ENCODE measurements at regions of chr1 and their contacts with region 1.

Region 1: GRCh38 chr1:231866392-231867331 is 240.1 kb downstream of the DISC1 start:
- DNase-seq: peak; percentile 22 to 81 (median 45)
- ATAC-seq: no peak
- H3K4me3 ChIP-seq: no peak overlapping the region
- H3K4me3 Mint-ChIP-seq: no peak overlapping the region
- H3K27ac ChIP-seq: no peak overlapping the region
- H3K27ac Mint-ChIP-seq: peak overlapping the region; percentile 31
- H3K4me1 ChIP-seq: peaks cover 17% of the 10 kb centered on the region
- H3K4me1 Mint-ChIP-seq: peaks cover 66% of the 10 kb centered on the region
- H3K27me3 ChIP-seq: no peaks in the 10 kb centered on the region
- H3K27me3 Mint-ChIP-seq: no peaks in the 10 kb centered on the region
- CTCF ChIP-seq: peak; percentile 98

Region 2: DNA sequence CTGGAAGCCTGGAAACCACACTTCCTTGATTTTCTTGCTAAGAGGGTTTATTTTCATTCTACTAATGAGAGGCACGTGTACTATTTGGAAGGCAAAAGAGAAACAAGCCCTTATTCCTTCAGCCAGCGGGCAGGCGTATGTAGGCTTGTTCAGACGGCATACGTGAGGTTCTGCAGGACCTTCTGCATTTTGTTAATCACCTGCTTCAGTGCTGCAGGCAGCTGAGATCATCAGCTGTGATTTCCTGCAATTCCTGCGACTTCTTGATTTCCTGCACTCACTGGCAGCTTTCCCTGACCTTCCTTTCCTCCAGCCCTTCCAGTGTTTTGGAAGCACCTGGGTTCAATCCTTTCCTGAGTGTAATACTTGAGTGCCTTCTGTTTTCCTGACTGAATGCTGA is 294.8 kb before region 1 on chr1:
- CTCF ChIA-PET with region 1: no interaction called
- POLR2A ChIA-PET with region 1: no interaction called
- intact Hi-C with region 1: no loop called
- DNase-seq: no peak
- ATAC-seq: no peak
- H3K4me3 ChIP-seq: no peak overlapping the region
- H3K4me3 Mint-ChIP-seq: no peak overlapping the region
- H3K27ac ChIP-seq: no peak overlapping the region
- H3K27ac Mint-ChIP-seq: no peak overlapping the region
- H3K4me1 ChIP-seq: no peaks in the 10 kb centered on the region
- H3K4me1 Mint-ChIP-seq: no peaks in the 10 kb centered on the region
- H3K27me3 ChIP-seq: no peaks in the 10 kb centered on the region
- H3K27me3 Mint-ChIP-seq: no peaks in the 10 kb centered on the region
- CTCF ChIP-seq: no peak

Region 3: GRCh38 chr1:231636157-231636556 is 230.5 kb before region 1 on chr1:
- CTCF ChIA-PET with region 1: no interaction called
- POLR2A ChIA-PET with region 1: no interaction called
- intact Hi-C with region 1: no loop called
- DNase-seq: no peak
- ATAC-seq: no peak
- H3K4me3 ChIP-seq: no peak overlapping the region
- H3K4me3 Mint-ChIP-seq: no peak overlapping the region
- H3K27ac ChIP-seq: no peak overlapping the region
- H3K27ac Mint-ChIP-seq: no peak overlapping the region
- H3K4me1 ChIP-seq: no peaks in the 10 kb centered on the region
- H3K4me1 Mint-ChIP-seq: peaks cover 56% of the 10 kb centered on the region
- H3K27me3 ChIP-seq: no peaks in the 10 kb centered on the region
- H3K27me3 Mint-ChIP-seq: no peaks in the 10 kb centered on the region
- CTCF ChIP-seq: no peak

Region 4: DNA sequence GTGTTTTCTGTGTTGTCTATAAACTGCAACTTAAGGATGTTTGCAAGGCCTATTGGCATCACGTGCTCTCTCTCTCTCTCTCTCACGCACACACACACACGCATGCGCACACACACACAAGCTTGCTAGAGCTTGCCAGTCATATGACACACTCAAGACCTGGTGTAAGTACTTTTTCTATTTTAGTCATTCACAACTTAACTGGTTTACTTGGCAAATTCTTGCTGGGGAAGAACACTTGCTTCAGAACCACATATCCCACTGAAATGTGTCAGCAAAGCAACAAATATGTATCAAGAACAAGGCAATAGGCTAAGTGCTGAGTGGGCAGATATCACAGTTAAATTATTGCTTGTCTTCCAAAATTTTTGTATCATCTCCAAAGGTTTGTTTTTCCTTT is 132.2 kb before region 1 on chr1:
- CTCF ChIA-PET with region 1: no interaction called
- POLR2A ChIA-PET with region 1: no interaction called
- intact Hi-C with region 1: no loop called
- DNase-seq: no peak
- ATAC-seq: no peak
- H3K4me3 ChIP-seq: no peak overlapping the region
- H3K4me3 Mint-ChIP-seq: no peak overlapping the region
- H3K27ac ChIP-seq: no peak overlapping the region
- H3K27ac Mint-ChIP-seq: no peak overlapping the region
- H3K4me1 ChIP-seq: no peaks in the 10 kb centered on the region
- H3K4me1 Mint-ChIP-seq: peaks cover 5% of the 10 kb centered on the region
- H3K27me3 ChIP-seq: no peaks in the 10 kb centered on the region
- H3K27me3 Mint-ChIP-seq: no peaks in the 10 kb centered on the region
- CTCF ChIP-seq: no peak

Region 5: DNA sequence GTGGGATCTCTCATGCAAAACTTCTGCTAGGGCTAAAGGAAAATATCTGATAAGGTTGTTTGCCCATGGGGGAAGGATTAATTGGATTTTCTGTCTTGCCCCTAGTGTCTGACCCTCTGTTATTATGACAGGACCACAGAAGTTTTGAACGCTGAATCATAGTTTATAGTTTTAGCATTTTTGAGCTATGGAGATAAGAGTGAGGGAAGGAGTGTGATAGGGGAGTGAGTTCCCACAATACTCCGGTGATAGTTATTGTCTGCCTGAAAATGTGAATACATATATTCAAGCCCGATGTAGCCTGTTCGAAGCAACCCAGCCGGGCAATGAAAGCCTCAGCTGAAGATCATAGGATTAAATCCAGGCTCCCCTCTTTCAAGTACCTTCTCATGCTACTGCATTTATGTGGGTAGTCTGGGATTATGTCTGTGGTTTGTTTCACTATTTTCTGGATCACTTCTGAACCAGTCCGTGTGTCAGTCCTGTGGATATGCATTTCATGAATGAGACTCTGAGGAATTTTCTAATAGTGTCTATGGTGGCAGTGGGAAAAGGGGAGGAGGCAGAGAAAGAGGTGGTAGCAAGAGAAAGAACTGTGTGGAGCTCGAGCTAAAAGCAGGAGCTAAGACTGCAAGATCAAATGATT is 18.7 kb after region 1 on chr1:
- CTCF ChIA-PET with region 1: no interaction called
- POLR2A ChIA-PET with region 1: no interaction called
- intact Hi-C with region 1: no loop called
- DNase-seq: no peak
- ATAC-seq: no peak
- H3K4me3 ChIP-seq: no peak overlapping the region
- H3K4me3 Mint-ChIP-seq: no peak overlapping the region
- H3K27ac ChIP-seq: no peak overlapping the region
- H3K27ac Mint-ChIP-seq: no peak overlapping the region
- H3K4me1 ChIP-seq: peaks cover 5% of the 10 kb centered on the region
- H3K4me1 Mint-ChIP-seq: peaks cover 16% of the 10 kb centered on the region
- H3K27me3 ChIP-seq: no peaks in the 10 kb centered on the region
- H3K27me3 Mint-ChIP-seq: no peaks in the 10 kb centered on the region
- CTCF ChIP-seq: no peak

Region 6: DNA sequence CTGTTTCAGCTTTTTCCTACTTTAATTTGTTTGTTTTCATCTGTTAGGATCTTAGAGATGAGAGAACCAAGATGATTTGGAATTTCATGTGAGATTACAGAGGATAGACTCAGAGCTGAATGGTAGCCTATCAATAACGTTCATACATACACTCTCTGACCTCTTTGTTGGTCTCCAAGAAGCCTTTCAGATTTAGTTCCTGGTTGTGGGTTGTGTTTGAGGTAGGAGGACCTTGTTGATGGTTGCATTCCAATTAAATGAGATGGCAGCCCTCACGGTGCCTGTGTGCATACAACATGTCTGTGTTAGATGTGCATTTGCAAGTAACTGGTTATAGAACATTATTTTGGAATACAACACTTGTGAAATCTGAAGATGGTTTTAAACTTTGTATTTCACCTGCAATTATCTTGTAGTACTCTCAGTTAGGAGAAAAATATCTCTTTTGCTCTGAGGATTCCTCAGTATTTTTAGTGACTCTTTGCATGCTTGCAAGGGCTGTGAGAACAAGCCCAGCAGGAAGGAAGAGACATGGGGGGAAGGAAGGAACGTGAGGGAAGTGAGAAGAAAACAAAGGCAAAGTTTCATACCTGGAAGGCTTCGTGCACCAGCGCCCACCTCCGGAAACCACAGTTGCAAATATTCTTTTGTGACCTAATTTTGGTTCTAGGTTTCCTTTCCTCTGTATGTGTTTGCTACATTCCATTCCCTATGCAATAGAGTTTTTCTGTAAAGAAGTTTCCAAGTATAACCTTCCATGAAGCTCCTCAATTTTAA is 51.8 kb after region 1 on chr1:
- CTCF ChIA-PET with region 1: interaction called, 4 read pairs
- POLR2A ChIA-PET with region 1: interaction called, 3 read pairs
- intact Hi-C with region 1: loop called in 1 of 2 experiments (anchors 5 kb)
- DNase-seq: peak in 12 of 14 experiments; percentile 5 to 77 (median 17)
- ATAC-seq: peak; percentile 61
- H3K4me3 ChIP-seq: peak overlapping the region; percentile 34
- H3K4me3 Mint-ChIP-seq: peak overlapping the region; percentile 71
- H3K27ac ChIP-seq: peak overlapping the region; percentile 61 to 74
- H3K27ac Mint-ChIP-seq: peak overlapping the region; percentile 85
- H3K4me1 ChIP-seq: peaks cover 71% of the 10 kb centered on the region
- H3K4me1 Mint-ChIP-seq: peaks cover 83% of the 10 kb centered on the region
- H3K27me3 ChIP-seq: no peaks in the 10 kb centered on the region
- H3K27me3 Mint-ChIP-seq: no peaks in the 10 kb centered on the region
- CTCF ChIP-seq: no peak

Region 7: GRCh38 chr1:231983588-231984193 is 117.0 kb after region 1 on chr1:
- CTCF ChIA-PET with region 1: no interaction called
- POLR2A ChIA-PET with region 1: interaction called, 3 read pairs
- intact Hi-C with region 1: loop called in 1 of 2 experiments (anchors 5 kb)
- DNase-seq: no peak
- ATAC-seq: no peak
- H3K4me3 ChIP-seq: no peak overlapping the region
- H3K4me3 Mint-ChIP-seq: no peak overlapping the region
- H3K27ac ChIP-seq: no peak overlapping the region
- H3K27ac Mint-ChIP-seq: no peak overlapping the region
- H3K4me1 ChIP-seq: no peaks in the 10 kb centered on the region
- H3K4me1 Mint-ChIP-seq: peaks cover 17% of the 10 kb centered on the region
- H3K27me3 ChIP-seq: no peaks in the 10 kb centered on the region
- H3K27me3 Mint-ChIP-seq: no peaks in the 10 kb centered on the region
- CTCF ChIP-seq: no peak

Region 8: DNA sequence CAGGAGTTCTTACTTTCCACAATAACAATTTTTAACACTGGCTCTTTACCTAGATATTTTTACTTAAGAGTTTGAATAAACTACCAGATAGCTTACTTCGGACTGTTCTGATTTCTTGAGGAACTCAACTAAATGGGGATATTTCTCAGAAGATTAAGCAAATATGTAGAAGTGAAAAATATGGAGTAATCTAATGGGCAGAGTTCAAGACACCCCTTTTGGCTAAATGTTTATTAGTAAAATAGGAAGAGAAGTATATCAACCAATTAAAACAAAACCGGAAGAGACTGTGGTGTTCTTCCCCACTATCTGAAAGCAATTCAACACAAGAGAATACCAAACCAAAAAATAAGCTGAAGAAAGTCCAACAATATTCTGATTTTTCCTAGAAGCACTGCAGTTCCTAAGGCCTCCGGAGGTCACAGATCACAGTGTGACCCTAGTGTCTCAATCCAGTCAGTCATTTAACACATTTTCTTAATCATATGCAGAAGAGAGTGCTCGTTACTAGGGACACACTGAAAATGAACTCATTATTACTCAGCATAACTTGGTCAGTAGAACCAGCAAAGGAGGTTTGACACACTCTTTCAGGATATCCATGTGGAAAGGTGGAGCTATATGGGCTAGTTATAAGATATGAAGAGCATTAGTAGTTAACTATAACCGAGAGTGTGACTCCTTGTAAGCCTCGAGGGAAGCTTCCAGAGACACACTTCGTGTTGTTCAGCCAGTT is 758.1 kb after region 1 on chr1:
- CTCF ChIA-PET with region 1: interaction called, 5 read pairs
- POLR2A ChIA-PET with region 1: interaction called, 3 read pairs
- intact Hi-C with region 1: loop called (anchors 2 kb)
- DNase-seq: no peak
- ATAC-seq: no peak
- H3K4me3 ChIP-seq: no peak overlapping the region
- H3K4me3 Mint-ChIP-seq: no peak overlapping the region
- H3K27ac ChIP-seq: no peak overlapping the region
- H3K27ac Mint-ChIP-seq: no peak overlapping the region
- H3K4me1 ChIP-seq: peaks cover 8% of the 10 kb centered on the region
- H3K4me1 Mint-ChIP-seq: peaks cover 21% of the 10 kb centered on the region
- H3K27me3 ChIP-seq: peaks cover 0 to 14% of the 10 kb centered on the region in 2 experiments
- H3K27me3 Mint-ChIP-seq: peaks cover 17% of the 10 kb centered on the region
- CTCF ChIP-seq: no peak

Region 9: DNA sequence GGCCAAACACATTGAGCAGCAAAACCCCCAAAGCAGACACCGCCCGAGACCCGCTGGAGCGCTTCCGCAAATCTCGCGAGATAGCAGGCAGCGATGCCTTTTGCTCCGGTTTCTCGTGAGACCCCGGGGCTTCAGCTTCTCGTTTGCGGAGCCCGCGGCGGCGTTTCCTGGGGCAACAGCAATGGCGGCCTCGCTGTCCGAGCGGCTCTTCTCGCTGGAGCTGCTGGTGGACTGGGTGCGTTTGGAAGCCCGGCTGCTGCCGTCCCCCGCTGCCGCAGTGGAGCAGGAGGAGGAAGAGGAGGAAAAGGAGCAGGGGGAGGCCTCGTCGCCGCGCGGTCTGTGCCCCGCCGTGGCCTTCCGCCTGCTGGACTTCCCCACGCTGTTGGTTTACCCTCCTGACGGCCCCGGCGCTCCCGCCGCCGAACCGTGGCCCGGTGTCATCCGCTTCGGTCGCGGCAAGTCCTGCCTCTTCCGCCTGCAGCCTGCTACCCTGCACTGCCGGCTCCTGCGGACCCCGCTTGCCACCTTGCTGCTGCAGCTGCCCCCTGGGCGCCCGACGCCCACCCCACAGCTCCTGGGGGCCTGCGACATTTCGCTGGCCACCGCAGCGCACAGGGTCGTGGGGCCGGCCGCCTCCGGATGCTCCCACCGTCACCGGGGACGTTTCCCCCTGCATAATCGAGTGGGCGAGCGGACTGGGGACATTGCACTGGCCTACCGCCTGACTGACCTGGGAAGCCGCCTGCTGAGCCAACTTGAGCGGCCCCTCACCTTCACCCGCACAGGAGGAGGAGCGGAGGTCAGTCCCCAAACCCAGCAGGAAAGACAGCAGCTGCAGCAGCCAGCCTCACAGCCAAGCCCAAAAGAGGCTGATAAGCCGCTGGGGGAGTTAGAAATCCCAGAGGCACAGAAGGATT is 938.9 kb after region 1 on chr1 and contains the start of gene MAP10:
- CTCF ChIA-PET with region 1: no interaction called
- POLR2A ChIA-PET with region 1: no interaction called
- intact Hi-C with region 1: loop called in 1 of 2 experiments (anchors 10 kb)
- DNase-seq: peak; percentile 44 to 88 (median 62)
- ATAC-seq: peak; percentile 78
- H3K4me3 ChIP-seq: peak within 1 kb of the TSS; percentile 80
- H3K4me3 Mint-ChIP-seq: peak within 1 kb of the TSS; percentile 92
- H3K27ac ChIP-seq: peak within 1 kb of the TSS in 1 of 2 donors; percentile 50
- H3K27ac Mint-ChIP-seq: peak within 1 kb of the TSS; percentile 79
- H3K4me1 ChIP-seq: peaks cover 13% of the 10 kb centered on the region
- H3K4me1 Mint-ChIP-seq: peaks cover 32% of the 10 kb centered on the region
- H3K27me3 ChIP-seq: no peaks in the 10 kb centered on the region
- H3K27me3 Mint-ChIP-seq: no peaks in the 10 kb centered on the region
- CTCF ChIP-seq: no peak
- total RNA-seq, gene MAP10: 0.99 to 1.2 TPM

Measured in CD4-positive, alpha-beta T cell (primary cell).